ENCODE measurements at regions of chr22 and their contacts with region 1.

Region 1: DNA sequence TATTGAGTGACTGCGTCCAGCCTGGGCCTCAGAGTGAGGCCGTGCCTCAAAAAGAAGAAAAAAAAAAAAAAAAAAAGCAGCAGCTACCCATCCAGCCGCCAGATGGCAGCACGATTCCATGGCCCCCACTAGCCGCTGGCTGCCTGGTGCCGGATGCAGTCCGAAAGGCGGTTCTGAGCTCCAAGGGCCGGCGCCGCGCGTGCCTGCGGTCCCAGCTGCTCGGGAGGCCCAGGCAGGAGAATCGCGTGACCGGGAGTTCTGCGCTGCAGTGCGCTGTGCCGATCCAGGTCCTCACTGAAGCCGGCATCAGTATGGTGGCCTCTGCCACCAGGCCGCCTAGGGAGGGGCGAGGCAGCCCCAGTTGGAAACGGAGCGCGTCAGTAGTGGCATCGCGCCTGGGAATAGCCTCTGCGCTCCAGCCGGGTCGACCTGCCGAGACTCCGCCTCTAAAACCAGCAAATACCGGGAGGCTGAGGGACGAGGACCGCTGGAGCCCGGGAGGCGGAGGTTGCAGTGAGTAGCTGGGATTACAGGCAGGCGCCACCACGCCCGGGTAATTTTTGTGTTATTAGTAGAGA is 19.3 kb downstream of the SCARF2 start:
- DNase-seq: peak; percentile 83
- ATAC-seq: peak; percentile 85
- H3K4me3 Mint-ChIP-seq: peak overlapping the region; percentile 59
- H3K27ac Mint-ChIP-seq: no peak overlapping the region
- H3K4me1 Mint-ChIP-seq: peaks cover under 1% of the 10 kb centered on the region; the same call in 1 of the 2 replicates
- H3K27me3 Mint-ChIP-seq: no peaks in the 10 kb centered on the region; the same call in 1 of the 2 replicates
- CTCF ChIP-seq: peak; percentile 80

Region 2: DNA sequence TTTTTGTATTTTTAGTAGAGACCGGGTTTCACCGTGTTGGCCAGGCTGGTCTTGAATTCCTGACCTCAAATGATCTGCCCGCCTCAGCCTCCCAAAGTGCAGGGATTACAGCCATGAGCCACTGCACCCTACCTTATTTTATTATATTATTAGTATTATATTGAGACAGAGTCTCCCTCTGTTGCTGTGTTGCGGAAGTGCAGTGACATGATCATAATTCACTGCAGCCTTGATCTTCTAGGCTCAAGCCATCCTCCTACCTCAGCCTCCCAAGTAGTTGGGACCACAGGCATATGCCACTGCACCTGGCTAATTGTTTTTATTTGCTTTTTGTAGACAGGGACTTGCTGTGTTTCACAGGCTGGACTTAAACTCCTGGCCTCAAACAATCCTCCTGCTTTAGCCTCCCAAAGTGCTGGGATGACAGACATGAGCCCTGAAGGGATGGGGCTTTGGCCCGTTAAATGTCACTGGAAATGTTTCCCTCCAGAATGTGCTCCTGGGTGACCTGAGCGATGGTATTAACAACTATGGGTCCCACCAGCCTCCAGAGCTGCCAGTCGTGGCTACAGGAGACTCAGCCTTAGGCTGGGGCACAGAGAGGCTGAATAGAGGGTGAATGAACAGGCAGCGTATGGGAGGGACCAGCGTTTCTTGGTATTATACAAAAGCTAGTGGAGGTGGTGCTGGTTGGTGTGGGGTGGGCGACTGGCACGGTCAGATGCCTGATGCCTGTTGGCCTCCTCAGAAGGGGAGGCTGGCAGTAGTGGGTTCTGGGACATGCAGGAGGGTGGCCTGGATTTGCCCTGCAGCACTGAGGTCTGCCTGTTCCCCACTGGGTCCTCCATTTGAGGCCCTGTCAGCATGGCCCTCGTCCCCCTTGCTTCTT is 390.1 kb before region 1 on chr22:
- CTCF ChIA-PET with region 1: no interaction called
- POLR2A ChIA-PET with region 1: no interaction called
- DNase-seq: no peak
- ATAC-seq: no peak
- H3K4me3 Mint-ChIP-seq: no peak overlapping the region
- H3K27ac Mint-ChIP-seq: no peak overlapping the region
- H3K4me1 Mint-ChIP-seq: 0 out of 2 replicates have a peak, but pooled peaks cover 4% of the 10 kb centered on the region
- H3K27me3 Mint-ChIP-seq: no peaks in the 10 kb centered on the region; the same call in 1 of the 2 replicates
- CTCF ChIP-seq: no peak

Region 3: DNA sequence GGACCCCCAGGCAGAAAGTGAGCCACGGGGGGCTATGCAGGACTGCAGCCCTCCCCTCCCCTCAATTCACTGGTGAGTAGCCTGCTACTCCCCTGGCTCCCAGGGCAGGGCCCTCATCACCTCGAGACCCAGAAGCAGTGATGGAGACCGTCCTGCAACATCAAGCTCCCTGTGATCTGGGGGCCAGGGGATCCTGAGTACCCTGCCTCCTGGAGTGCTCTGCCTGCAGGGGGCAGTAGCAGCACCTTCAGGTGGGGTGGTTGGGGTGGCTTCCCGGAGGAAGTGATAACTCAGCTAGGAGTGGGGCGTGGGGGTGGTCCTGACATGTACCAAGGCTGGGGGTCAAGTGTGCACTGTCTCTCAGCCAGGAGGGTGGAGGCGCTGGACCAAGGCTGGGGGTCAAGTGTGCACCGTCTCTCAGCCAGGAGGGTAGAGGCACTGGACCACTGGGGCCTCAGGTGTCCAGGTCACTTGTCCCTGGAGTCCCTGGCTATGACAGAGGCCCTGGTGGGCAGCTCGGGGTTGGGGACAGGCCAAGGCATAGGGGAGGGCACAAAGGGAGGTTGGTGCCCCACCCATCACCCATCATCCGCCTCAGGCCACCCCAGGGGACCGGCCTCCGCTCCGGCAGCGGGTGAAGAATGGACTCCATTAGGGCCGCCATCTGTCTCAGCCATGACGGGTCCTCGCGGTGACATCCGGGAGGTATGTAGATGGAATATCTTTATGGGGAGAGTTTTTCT is 159.5 kb before region 1 on chr22:
- CTCF ChIA-PET with region 1: no interaction called
- POLR2A ChIA-PET with region 1: no interaction called
- DNase-seq: peak; percentile 49
- ATAC-seq: no peak; the same call in 1 of the 2 replicates
- H3K4me3 Mint-ChIP-seq: no peak overlapping the region
- H3K27ac Mint-ChIP-seq: no peak overlapping the region
- H3K4me1 Mint-ChIP-seq: no peaks in the 10 kb centered on the region
- H3K27me3 Mint-ChIP-seq: no peaks in the 10 kb centered on the region
- CTCF ChIP-seq: peak; percentile 32; the same call in 1 of the 2 replicates

Region 4: GRCh38 chr22:20319745-20320658 is 98.3 kb before region 1 on chr22 and contains the start of gene DGCR6L:
- CTCF ChIA-PET with region 1: interaction called, 23 read pairs
- POLR2A ChIA-PET with region 1: no interaction called
- DNase-seq: peak; percentile 97
- ATAC-seq: peak; percentile 70
- H3K4me3 Mint-ChIP-seq: peak within 1 kb of the TSS; percentile 91
- H3K27ac Mint-ChIP-seq: peak within 1 kb of the TSS; percentile 73
- H3K4me1 Mint-ChIP-seq: peaks cover 37% of the 10 kb centered on the region
- H3K27me3 Mint-ChIP-seq: no peaks in the 10 kb centered on the region
- CTCF ChIP-seq: no peak
- total RNA-seq, gene DGCR6L: 61.9 to 68.5 TPM (median 63.6 TPM) in 3 replicates

Region 5: GRCh38 chr22:20405931-20406685 is 12.2 kb before region 1 on chr22:
- CTCF ChIA-PET with region 1: interaction called, 25 read pairs
- POLR2A ChIA-PET with region 1: interaction called, 8 read pairs
- DNase-seq: no peak
- ATAC-seq: no peak
- H3K4me3 Mint-ChIP-seq: no peak overlapping the region
- H3K27ac Mint-ChIP-seq: no peak overlapping the region
- H3K4me1 Mint-ChIP-seq: no peaks in the 10 kb centered on the region
- H3K27me3 Mint-ChIP-seq: no peaks in the 10 kb centered on the region; the same call in 1 of the 2 replicates
- CTCF ChIP-seq: no peak

Region 6: DNA sequence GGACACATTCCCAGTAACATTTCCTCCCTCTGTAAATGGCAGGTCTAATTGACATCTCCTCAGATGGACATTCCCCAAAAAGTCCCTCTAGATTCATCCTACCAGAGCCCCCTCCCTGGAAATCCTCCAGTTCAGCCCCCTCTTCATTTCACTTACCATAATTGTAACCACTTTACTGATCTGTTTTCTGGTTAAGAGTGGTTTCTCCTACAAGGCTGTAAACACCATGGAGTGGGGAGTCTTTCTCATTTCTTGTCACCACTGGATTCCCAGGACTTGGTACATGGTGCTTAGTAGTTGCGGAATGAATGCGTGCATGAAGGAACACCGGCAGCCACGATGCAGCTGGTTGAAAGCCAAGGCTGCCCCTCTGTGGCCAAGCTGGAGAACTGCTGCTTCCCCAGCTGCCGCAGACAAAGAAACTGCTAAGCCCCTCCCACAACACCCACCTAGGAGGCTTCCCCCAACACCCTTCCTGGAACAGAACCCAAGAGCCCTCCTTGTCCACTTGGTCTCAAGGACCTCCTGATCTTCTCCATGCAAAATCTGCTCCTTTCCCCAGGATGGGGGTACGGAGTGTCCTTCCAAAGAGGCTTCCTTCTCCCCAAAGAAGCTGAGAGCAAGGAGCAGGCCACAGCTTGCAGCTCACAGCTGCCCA is 37.9 kb after region 1 on chr22:
- CTCF ChIA-PET with region 1: interaction called, 146 read pairs
- POLR2A ChIA-PET with region 1: no interaction called
- DNase-seq: peak; percentile 86
- ATAC-seq: peak; percentile 97
- H3K4me3 Mint-ChIP-seq: no peak overlapping the region
- H3K27ac Mint-ChIP-seq: peak overlapping the region; percentile 57; the same call in 1 of the 2 replicates
- H3K4me1 Mint-ChIP-seq: peaks cover 19% of the 10 kb centered on the region
- H3K27me3 Mint-ChIP-seq: no peaks in the 10 kb centered on the region
- CTCF ChIP-seq: peak; percentile 69

Region 7: DNA sequence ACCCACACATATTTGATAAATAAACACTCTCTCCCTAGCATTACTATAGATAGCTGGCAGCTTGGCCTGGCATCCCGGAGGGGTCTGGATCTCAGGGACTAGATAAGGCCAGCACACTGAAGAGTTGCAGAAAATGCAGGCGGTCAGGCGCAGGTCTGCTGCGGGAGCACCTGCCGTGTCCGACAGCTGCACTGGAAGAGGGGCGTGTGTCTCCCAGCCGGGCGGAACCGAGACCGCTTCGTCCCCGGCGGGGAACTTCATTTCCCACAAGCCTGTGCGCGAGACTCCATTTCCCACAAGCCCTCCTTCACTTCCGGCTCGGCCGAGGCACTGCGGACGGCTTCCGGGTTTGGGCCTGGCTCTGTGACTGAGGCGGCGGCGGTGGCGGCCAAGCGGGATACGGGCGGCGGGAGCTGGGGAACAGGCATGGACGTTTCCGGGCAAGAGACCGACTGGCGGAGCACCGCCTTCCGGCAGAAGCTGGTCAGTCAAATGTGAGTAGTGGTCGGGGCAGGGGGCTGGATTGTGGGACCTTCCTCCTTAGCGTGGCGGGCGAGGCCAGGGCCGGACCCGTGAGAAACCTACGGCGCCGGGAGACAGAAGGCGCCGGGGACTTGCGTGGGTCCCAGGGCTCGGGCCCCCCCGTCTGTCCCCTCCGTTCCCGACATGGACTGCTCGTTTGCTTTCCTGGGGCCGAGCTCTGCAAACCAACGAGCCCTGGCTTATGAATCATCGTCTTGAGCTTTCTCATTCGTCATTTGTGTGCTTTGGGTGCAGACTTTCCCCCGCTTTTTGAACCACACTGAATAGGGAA is 89.2 kb after region 1 on chr22 and contains the start of gene MED15:
- CTCF ChIA-PET with region 1: interaction called, 12 read pairs
- POLR2A ChIA-PET with region 1: no interaction called
- DNase-seq: peak; percentile 95
- ATAC-seq: peak; percentile 92
- H3K4me3 Mint-ChIP-seq: peak within 1 kb of the TSS; percentile 95
- H3K27ac Mint-ChIP-seq: peak within 1 kb of the TSS; percentile 88
- H3K4me1 Mint-ChIP-seq: peaks cover 37% of the 10 kb centered on the region
- H3K27me3 Mint-ChIP-seq: no peaks in the 10 kb centered on the region
- CTCF ChIP-seq: no peak
- total RNA-seq, gene MED15: 60.9 to 67.7 TPM (median 62.6 TPM) in 3 replicates

Region 8: DNA sequence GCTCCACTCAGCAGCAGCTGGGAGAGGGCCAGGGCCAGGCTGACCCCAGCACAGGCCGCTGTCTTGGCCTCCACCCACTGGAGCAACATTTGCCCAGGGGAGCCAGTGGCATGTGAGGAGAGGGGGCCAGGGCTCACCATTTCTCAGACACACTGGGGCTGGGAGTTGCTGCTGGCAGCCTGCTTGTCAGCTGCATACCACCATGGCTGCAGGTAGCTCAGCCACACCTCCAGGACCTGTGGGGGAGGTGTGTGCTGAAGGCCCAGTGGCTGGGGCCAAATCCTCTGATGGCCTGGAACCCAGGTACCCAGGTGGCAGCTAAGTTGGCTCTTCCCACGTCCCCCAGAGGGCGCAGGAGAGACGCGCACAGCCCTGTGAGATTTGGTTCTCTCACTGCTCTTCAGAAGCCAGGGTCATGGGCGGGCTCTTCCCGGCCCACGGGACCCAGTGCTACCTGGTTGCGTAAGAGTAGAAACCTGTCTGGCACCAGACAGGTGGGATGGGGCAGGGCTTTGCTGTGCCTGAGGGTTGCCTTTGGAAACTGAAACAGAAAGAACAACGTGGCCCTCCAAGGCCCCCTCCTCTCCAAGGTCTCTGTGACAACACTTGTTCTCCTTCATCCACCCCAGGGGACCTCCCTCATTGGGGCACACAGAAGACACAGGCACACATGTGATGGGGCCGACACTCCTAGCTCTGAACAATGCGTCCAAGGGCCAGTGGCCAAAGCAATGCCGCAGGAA is 187.9 kb after region 1 on chr22:
- CTCF ChIA-PET with region 1: interaction called, 12 read pairs
- POLR2A ChIA-PET with region 1: interaction called, 4 read pairs
- DNase-seq: peak; percentile 88
- ATAC-seq: peak; percentile 93
- H3K4me3 Mint-ChIP-seq: no peak overlapping the region
- H3K27ac Mint-ChIP-seq: no peak overlapping the region
- H3K4me1 Mint-ChIP-seq: peaks cover 12% of the 10 kb centered on the region
- H3K27me3 Mint-ChIP-seq: no peaks in the 10 kb centered on the region
- CTCF ChIP-seq: peak; percentile 56; the same call in 1 of the 2 replicates

Measured in WTC11 (cell line).